Heart right ventricle (tissue), 16 donors: ENCODE measurements at regions of chr6 and their contacts with region 1.

Region 1: DNA sequence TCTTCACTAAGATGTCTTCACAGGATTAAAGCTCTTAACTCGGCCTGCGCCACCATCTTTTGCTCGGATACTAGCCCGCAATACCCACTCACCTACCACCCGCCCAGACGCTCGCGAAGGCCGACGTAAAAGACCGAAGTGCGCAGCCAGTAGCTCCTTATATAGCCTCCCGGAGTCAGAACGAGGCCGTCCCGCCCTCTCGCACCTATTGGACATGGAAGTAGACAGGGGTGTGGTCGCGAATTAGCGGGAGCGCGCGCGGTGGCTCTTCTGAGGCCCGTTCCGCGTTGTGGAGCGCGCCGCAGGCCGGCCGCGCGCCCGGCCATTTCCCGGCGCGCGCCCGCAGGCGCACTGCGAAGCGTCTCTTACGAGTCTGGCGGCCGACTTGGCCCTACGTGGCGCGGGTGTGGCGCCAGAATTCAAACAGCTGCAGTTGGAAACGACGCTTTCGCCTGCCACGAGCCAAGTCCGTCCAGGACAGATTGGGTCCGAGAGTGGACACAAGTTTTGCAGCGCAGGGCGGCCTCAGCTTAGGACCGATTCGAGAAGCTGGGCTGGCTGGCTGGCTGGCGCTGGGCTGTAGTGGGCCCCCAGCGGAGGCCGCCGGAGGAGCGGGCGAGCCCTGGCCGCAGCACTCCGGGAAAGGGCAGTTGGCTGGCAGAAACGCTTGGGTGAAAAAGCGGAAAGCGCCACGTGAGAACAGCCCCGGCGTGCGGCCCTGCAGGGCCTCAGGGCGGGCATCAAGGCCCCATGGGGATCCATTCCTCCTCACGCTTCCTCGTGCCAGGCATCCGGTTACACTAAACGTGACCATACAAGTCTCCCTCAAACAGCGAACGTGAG is 36.1 kb upstream of the SYNCRIP start:
- DNase-seq: peak; percentile 97 to 98
- ATAC-seq: peak; percentile 98 to 99 (median 99)
- H3K4me3 ChIP-seq: peak overlapping the region; percentile 61 to 91 (median 82)
- H3K27ac ChIP-seq: peak overlapping the region; percentile 73 to 95 (median 90)
- H3K4me1 ChIP-seq: peaks cover 4 to 46% (median 36%) of the 10 kb centered on the region in 9 donors
- H3K27me3 ChIP-seq: no peaks in the 10 kb centered on the region
- CTCF ChIP-seq: peak in 2 of 9 donors; percentile 14 to 21

Region 2: GRCh38 chr6:85537055-85537494 is 141.7 kb before region 1 on chr6:
- intact Hi-C with region 1: loop called in 1 of 10 experiments (anchors 10 kb)
- DNase-seq: no peak
- ATAC-seq: no peak
- H3K4me3 ChIP-seq: no peak overlapping the region
- H3K27ac ChIP-seq: no peak overlapping the region
- H3K4me1 ChIP-seq: no peaks in the 10 kb centered on the region
- H3K27me3 ChIP-seq: no peaks in the 10 kb centered on the region
- CTCF ChIP-seq: peak; percentile 49 to 76 (median 67)

Region 3: GRCh38 chr6:85593438-85594196 is 85.2 kb before region 1 on chr6 and contains the start of gene SNX14:
- intact Hi-C with region 1: loop called in 7 of 10 experiments (anchors 1 to 5 kb)
- DNase-seq: peak; percentile 95 to 97
- ATAC-seq: peak; percentile 97 to 99 (median 98)
- H3K4me3 ChIP-seq: peak within 1 kb of the TSS; percentile 66 to 97 (median 83)
- H3K27ac ChIP-seq: peak within 1 kb of the TSS; percentile 82 to 99 (median 97)
- H3K4me1 ChIP-seq: peaks cover 0 to 32% (median 27%) of the 10 kb centered on the region in 9 donors
- H3K27me3 ChIP-seq: no peaks in the 10 kb centered on the region
- CTCF ChIP-seq: peak in 4 of 9 donors; percentile 24 to 39 (median 32)
- total RNA-seq, gene SNX14: 21.3 to 38.1 (median 27.1) TPM

Region 4: DNA sequence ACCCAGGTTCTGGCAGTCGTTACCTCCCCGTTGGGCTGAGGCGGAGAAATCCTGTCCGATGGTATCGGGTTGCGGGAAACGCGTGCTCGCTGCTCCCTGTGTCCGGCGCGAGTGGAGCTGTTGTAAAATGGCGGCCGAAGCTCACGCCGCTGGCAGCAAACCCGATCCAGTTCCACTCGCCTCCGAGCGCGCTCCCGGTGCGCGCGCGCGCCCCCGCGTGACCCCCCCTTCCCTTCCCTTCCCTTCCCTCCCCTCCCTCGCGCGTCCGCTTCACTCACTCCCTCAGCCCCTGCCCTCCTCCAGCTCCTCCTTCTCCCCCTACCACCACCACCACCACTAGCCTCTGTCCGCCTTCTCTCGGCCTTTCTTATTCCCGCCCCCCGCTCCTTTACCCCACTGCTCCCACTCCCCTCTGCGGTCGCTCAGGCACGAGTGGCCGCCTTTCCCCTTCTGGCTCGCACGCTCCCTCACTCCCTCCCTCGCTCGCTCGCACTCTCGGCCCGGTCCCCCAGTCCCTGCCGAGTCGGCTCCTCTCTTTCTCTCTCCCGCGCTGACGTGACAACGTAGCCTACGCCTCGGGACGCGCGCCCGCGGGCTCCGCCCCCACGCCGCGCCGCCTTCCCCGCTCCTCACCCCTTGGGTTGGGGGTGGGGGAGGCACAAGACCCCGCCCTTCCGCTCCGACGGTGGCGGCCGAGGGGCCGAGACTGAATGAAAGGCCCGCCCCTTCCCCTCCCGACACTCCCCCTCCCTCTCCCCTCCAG is 35.9 kb before region 1 on chr6 and contains the start of gene SYNCRIP:
- intact Hi-C with region 1: loop called (anchors 1 to 5 kb)
- DNase-seq: peak; percentile 99
- ATAC-seq: peak; percentile 88 to 96 (median 92)
- H3K4me3 ChIP-seq: peak within 1 kb of the TSS; percentile 78 to 99 (median 95)
- H3K27ac ChIP-seq: peak within 1 kb of the TSS; percentile 97 to 100 (median 100)
- H3K4me1 ChIP-seq: peaks cover 4 to 50% (median 42%) of the 10 kb centered on the region in 9 donors
- H3K27me3 ChIP-seq: no peaks in the 10 kb centered on the region
- CTCF ChIP-seq: no peak
- total RNA-seq, gene SYNCRIP: 56.1 to 72.6 (median 61.2) TPM